OCI-LY7 (cell line): ENCODE measurements at regions of chr6 and their contacts with region 1.

Region 1: GRCh38 chr6:45075246-45075645 is 252.9 kb upstream of the RUNX2 start:
- DNase-seq: no peak
- H3K4me3 ChIP-seq: no peak overlapping the region
- H3K27ac ChIP-seq: no peak overlapping the region
- H3K4me1 ChIP-seq: no peaks in the 10 kb centered on the region
- CTCF ChIP-seq: no peak

Region 2: GRCh38 chr6:45086360-45087084 is 11.3 kb after region 1 on chr6:
- CTCF ChIA-PET with region 1: no interaction called
- POLR2A ChIA-PET with region 1: interaction called, 10 read pairs
- intact Hi-C with region 1: no loop called
- DNase-seq: no peak
- H3K4me3 ChIP-seq: no peak overlapping the region
- H3K27ac ChIP-seq: no peak overlapping the region
- H3K4me1 ChIP-seq: no peaks in the 10 kb centered on the region
- CTCF ChIP-seq: 0 out of 2 replicates have a peak, but pooled peaks have one; percentile 30